ENCODE measurements at regions of chr20 and their contacts with region 1.

Region 1: DNA sequence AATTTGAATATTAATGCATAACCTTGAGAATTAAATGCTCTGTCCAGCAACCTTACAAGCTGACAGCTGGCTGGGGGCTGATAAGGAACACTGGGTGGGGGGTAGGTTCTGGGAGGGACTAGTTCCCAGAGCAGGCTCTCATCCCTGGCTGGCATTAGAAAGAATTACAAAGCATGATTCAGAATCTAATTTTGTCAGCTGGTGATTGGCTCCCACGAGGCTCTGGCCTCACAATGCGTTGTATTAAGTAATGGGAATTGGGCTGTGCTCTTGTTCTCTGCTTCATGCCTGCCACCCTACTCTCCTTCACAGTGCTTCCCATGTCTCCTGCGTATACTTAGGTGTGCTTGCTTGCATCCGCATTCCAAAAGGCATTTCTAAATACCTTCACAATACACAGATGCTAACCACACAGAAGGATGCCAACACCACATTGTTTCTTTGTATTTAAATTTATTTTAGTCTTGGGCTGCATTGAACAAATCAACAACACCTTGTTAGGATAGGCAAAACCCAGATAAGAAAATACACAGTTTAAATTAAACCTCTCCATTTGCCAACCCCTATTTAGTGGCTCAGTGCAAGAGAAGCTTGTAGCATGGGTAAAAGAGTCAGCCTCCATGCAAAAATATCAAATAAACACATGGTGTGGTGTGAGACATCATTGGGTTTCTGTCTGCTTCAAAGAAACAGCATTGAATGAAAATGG is 434.5 kb upstream of the JAG1 start:
- DNase-seq: peak in 4 of 5 donors; percentile 49 to 61 (median 58)
- ATAC-seq: peak; percentile 96 to 99 (median 98)
- H3K4me3 ChIP-seq: no peak overlapping the region
- H3K27ac ChIP-seq: peak overlapping the region in 9 of 12 donors; percentile 28 to 77 (median 52)
- H3K4me1 ChIP-seq: peaks cover 0 to 24% (median 12%) of the 10 kb centered on the region in 12 donors
- H3K27me3 ChIP-seq: no peaks in the 10 kb centered on the region
- CTCF ChIP-seq: no peak
- POLR2A ChIP-seq: no peak

Region 2: DNA sequence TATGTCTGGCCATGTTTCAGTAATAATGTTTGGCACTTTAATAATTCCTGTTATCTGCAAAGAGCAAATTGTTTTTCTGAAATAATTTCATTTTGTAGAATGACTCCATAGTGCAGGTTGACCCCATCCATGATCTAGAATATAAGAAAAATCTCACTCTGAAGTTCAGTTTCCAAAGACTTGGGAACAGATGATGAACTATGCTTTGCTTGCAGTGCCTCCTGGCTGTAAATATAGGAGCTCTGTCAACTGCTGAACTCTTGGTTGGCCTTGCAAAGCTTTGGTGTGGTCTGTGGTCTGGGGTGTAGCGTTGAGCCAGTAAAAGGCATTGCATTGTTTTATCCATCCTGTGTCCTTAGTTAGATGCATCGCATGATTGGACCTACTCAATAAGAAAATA is 1935.4 kb before region 1 on chr20:
- intact Hi-C with region 1: no loop called
- DNase-seq: no peak
- ATAC-seq: peak in 3 of 4 donors; percentile 55 to 65 (median 64)
- H3K4me3 ChIP-seq: no peak overlapping the region
- H3K27ac ChIP-seq: peak overlapping the region in 1 of 12 donors; percentile 13
- H3K4me1 ChIP-seq: peaks cover 0 to 34% (median 20%) of the 10 kb centered on the region in 12 donors
- H3K27me3 ChIP-seq: no peaks in the 10 kb centered on the region
- CTCF ChIP-seq: peak in 11 of 12 donors; percentile 20 to 66 (median 44)
- POLR2A ChIP-seq: no peak

Region 3: DNA sequence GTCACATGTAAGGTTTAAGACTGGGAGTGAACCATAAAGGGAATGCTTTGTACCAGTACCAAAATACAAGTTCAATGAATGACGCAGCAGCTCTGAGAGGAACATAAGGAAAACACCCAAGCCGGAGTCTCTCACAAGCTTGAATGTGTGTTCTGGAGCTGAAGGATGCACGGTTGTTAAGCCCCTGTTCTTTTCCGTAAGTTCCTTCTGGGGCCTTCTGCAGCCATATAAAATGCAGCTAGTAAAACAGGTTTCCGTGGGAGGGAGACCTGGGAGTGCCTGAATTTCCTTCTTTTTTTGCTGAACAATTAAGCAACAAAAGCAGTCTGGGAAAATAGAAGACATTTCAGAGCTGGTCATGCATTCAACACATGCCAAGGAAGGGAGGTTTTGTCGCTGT is 361.2 kb before region 1 on chr20:
- intact Hi-C with region 1: no loop called
- DNase-seq: peak in 2 of 5 donors; percentile 20 to 26
- ATAC-seq: peak; percentile 47 to 80 (median 56)
- H3K4me3 ChIP-seq: peak overlapping the region in 1 of 12 donors; percentile 10
- H3K27ac ChIP-seq: peak overlapping the region; percentile 12 to 81 (median 61)
- H3K4me1 ChIP-seq: peaks cover 0 to 33% (median 6%) of the 10 kb centered on the region in 12 donors
- H3K27me3 ChIP-seq: no peaks in the 10 kb centered on the region
- CTCF ChIP-seq: no peak
- POLR2A ChIP-seq: no peak

Region 4: GRCh38 chr20:11057624-11058023 is 50.6 kb before region 1 on chr20:
- intact Hi-C with region 1: loop called in 1 of 10 experiments (anchors 5 kb)
- DNase-seq: no peak
- ATAC-seq: no peak
- H3K4me3 ChIP-seq: no peak overlapping the region
- H3K27ac ChIP-seq: peak overlapping the region in 2 of 12 donors; percentile 2 to 40
- H3K4me1 ChIP-seq: no peaks in the 10 kb centered on the region
- H3K27me3 ChIP-seq: no peaks in the 10 kb centered on the region
- CTCF ChIP-seq: no peak
- POLR2A ChIP-seq: no peak

Region 5: GRCh38 chr20:11124849-11125505 is 16.7 kb after region 1 on chr20:
- intact Hi-C with region 1: loop called in 1 of 10 experiments (anchors 2 kb)
- DNase-seq: no peak
- ATAC-seq: no peak
- H3K4me3 ChIP-seq: no peak overlapping the region
- H3K27ac ChIP-seq: no peak overlapping the region
- H3K4me1 ChIP-seq: peaks cover 0 to 5% (median 0%) of the 10 kb centered on the region in 12 donors
- H3K27me3 ChIP-seq: no peaks in the 10 kb centered on the region
- CTCF ChIP-seq: no peak
- POLR2A ChIP-seq: no peak

Region 6: DNA sequence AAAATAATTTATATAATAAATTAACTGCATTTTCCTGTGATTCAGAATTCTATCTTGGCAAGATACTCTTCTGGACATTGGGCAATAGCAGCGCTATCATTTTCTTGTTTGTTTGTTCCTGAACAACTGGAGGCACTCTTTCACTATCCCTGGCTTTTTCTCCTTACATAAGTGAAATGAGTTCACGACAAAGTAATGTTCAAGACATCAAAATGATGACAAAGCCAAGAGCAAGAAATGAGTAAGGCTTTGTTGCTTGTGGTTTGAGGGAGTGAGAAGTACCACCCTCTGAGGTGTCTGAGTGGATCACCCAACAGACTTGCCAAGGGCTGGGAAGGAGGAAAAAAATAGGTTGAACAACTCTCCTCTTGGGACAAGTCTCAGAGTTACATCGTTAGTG is 32.1 kb after region 1 on chr20:
- intact Hi-C with region 1: no loop called
- DNase-seq: no peak
- ATAC-seq: peak in 2 of 4 donors; percentile 36 to 60
- H3K4me3 ChIP-seq: no peak overlapping the region
- H3K27ac ChIP-seq: no peak overlapping the region
- H3K4me1 ChIP-seq: peaks cover 0 to 2% (median 0%) of the 10 kb centered on the region in 12 donors
- H3K27me3 ChIP-seq: no peaks in the 10 kb centered on the region
- CTCF ChIP-seq: no peak
- POLR2A ChIP-seq: no peak